Endothelial cell of umbilical vein (primary cell): ENCODE measurements at regions of chrX and their contacts with region 1.

Region 1: DNA sequence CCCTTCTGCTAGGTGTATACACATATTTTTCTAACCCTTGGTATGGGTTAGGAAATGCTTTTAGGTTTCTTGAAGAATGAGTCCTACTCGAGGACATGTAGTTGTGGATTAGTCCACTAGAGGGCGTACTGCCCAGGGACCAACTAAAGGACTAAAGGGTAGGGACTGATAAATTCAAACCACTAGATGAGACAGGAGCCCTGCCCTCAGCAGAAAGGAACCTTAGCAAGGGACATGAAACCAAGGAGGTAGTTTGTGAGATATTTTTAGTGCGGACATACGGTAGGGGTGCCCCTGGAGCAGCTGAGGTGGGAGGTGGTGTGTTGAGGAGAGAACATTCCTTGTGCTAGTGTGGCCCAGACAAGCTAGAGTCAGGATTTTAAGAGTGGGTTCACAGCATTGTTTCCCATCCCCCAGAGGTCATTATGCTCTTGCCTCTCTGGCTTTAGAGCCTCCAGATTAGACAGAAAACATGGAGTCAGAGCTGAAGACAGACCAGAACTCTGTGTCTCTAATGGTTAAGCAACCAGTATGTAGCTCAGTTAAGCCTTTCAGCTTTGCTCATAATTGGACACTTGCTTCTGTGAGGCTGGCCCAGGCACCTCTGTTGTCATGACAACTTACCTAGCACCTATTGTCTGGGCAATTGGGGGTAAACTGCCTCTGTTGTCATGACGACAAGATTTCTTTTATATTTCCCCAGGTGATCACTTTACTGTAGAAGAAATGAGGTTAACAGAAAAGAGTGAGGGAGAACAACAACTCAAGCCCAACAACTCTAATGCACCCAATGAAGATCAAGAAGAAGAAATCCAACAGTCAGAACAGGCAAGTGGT is 1.0 kb downstream of the TMEM31 start:
- DNase-seq: peak; percentile 57
- H3K4me3 ChIP-seq: no peak overlapping the region
- H3K27ac ChIP-seq: no peak overlapping the region
- H3K4me1 ChIP-seq: no peaks in the 10 kb centered on the region
- H3K27me3 ChIP-seq: no peaks in the 10 kb centered on the region
- CTCF ChIP-seq: peak; percentile 51 to 55
- POLR2A ChIP-seq: no peak

Region 2: DNA sequence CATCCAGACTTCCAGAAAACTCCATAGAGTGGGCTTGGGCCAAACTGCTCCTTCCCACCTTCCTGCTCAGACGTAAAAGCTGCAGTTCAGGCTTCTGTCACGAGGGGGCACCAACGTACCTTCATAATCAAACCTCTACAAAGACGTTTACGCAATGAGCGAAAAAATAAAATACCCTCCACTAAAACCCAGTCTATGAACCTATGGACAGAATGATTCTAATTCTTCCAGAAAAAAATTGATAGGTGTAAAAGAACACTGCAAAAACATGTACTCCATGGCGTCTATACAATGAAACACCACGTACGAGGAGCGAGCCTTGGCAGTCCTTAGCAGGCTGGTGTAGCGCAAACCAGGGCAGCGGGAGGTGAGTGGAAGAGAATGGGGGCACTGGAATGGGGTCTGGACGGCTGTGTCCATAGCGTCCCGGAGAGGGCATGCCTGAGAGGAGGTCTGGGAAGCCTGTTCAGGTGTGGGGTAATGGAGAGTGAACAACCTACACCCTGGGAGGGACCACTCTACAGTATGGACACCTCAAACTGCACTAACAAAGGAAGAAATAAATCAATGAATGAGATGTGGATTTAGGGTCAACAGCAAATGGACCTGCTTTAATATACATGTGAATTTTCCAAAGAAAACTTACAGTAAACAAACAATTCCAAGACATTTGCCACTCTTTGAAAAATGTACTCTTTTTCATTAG is 178.1 kb before region 1 on chrX:
- CTCF ChIA-PET with region 1: interaction called, 7 read pairs
- POLR2A ChIA-PET with region 1: no interaction called
- dilution Hi-C with region 1: no loop called
- intact Hi-C with region 1: loop called (anchors 1 kb)
- DNase-seq: peak; percentile 69
- H3K4me3 ChIP-seq: peak overlapping the region in 1 of 3 experiments; percentile 5
- H3K27ac ChIP-seq: no peak overlapping the region
- H3K4me1 ChIP-seq: no peaks in the 10 kb centered on the region
- H3K27me3 ChIP-seq: no peaks in the 10 kb centered on the region
- CTCF ChIP-seq: peak; percentile 61 to 62
- POLR2A ChIP-seq: no peak

Region 3: DNA sequence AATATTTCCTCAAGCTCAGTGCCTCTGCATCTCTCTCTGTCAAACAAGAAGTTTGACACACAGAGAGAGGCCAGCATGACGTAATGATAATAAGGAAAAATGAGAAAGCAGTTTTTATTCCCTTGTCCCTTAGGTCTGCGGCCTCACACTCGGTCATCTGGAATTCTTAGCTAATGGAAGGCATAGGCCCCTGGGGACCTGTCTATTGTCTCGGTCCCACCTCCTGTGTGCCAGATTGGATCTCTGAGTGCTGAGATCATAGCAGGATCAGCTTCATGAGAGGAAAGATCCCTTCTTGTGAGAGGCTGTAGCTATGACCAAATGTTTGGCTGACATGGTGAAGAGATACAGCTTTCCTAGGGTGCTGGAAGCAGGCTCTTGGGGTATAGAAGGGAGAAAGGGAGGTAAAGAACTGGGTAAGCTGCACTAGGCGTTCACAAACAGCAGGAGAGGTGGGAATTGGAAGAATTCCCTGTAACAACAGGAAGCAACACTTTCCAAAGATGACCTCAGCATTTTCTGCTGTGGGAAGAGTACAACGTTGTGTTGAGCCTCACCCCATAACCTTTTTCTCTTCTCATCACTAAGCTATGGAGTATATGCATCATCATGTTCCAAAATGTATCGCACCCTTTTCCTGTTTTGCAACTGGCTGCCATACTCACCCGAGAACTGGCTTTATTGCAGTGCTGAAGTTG is 19.2 kb after region 1 on chrX:
- CTCF ChIA-PET with region 1: interaction called, 28 read pairs
- POLR2A ChIA-PET with region 1: no interaction called
- dilution Hi-C with region 1: no loop called
- intact Hi-C with region 1: no loop called
- DNase-seq: peak; percentile 73
- H3K4me3 ChIP-seq: no peak overlapping the region
- H3K27ac ChIP-seq: peak overlapping the region; percentile 74
- H3K4me1 ChIP-seq: peaks cover 18% of the 10 kb centered on the region
- H3K27me3 ChIP-seq: no peaks in the 10 kb centered on the region
- CTCF ChIP-seq: no peak
- POLR2A ChIP-seq: no peak

Region 4: DNA sequence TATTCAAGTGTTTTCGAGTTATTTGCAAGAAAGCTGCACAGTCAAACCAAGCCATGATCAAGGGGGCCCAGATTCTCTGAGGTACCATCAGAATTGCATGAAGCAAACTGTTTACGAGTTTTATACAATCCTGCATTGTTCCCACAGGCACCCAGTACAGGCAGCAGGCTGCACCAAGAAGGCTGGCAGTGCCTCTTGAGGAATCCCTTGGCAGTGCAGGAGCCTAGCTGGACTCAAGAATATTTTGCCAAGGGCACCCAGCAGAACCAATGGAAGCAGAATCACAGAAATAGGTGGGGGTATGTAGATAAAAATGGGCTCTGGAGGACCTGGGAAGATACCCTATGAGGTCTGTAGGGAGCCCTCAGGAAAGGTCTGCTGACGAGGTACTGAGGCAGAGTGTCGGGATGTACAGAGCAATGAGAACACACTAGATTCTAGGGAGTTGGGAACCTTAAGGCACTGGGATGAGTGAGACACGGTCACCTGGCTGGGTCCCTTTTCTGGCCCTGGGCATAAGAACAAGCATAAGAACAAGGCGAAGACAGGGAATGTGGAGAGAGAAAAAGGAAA is 62.4 kb after region 1 on chrX:
- CTCF ChIA-PET with region 1: interaction called, 46 read pairs
- POLR2A ChIA-PET with region 1: no interaction called
- dilution Hi-C with region 1: no loop called
- intact Hi-C with region 1: loop called (anchors 1 kb)
- DNase-seq: peak; percentile 40
- H3K4me3 ChIP-seq: no peak overlapping the region
- H3K27ac ChIP-seq: no peak overlapping the region
- H3K4me1 ChIP-seq: no peaks in the 10 kb centered on the region
- H3K27me3 ChIP-seq: peaks cover 0 to 2% of the 10 kb centered on the region in 2 experiments
- CTCF ChIP-seq: peak; percentile 39 to 40
- POLR2A ChIP-seq: no peak

Region 5: DNA sequence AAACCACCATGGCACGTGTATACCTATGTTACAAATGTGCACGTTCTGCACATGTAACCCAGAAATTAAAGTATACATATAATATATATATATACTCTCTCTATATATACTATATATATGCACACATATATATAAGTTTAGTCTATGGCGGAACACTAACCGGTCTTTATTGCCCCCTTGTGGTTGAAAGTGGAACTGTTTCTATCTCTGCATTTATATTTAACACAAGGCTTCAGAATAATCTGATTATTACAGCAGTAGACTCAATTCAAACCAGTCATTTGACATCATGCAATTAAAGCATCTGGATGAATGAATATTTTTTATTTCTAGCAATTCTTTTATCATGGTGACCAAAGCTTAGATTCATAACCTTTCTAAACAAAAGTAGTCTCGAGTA is 105.8 kb after region 1 on chrX:
- CTCF ChIA-PET with region 1: interaction called, 3 read pairs
- POLR2A ChIA-PET with region 1: no interaction called
- dilution Hi-C with region 1: no loop called
- intact Hi-C with region 1: loop called (anchors 1 kb)
- DNase-seq: peak; percentile 53
- H3K4me3 ChIP-seq: no peak overlapping the region
- H3K27ac ChIP-seq: no peak overlapping the region
- H3K4me1 ChIP-seq: no peaks in the 10 kb centered on the region
- H3K27me3 ChIP-seq: no peaks in the 10 kb centered on the region
- CTCF ChIP-seq: peak in 1 of 2 donors; percentile 18
- POLR2A ChIP-seq: no peak